Common myeloid progenitor, CD34-positive (primary cell): ENCODE measurements at regions of chr14 and their contacts with region 1.

Region 1: GRCh38 chr14:94056579-94057308 is 24.3 kb downstream of the DDX24 start:
- DNase-seq: no peak
- H3K4me3 ChIP-seq: no peak overlapping the region
- H3K27ac ChIP-seq: no peak overlapping the region
- H3K4me1 ChIP-seq: no peaks in the 10 kb centered on the region
- H3K27me3 ChIP-seq: no peaks in the 10 kb centered on the region

Region 2: DNA sequence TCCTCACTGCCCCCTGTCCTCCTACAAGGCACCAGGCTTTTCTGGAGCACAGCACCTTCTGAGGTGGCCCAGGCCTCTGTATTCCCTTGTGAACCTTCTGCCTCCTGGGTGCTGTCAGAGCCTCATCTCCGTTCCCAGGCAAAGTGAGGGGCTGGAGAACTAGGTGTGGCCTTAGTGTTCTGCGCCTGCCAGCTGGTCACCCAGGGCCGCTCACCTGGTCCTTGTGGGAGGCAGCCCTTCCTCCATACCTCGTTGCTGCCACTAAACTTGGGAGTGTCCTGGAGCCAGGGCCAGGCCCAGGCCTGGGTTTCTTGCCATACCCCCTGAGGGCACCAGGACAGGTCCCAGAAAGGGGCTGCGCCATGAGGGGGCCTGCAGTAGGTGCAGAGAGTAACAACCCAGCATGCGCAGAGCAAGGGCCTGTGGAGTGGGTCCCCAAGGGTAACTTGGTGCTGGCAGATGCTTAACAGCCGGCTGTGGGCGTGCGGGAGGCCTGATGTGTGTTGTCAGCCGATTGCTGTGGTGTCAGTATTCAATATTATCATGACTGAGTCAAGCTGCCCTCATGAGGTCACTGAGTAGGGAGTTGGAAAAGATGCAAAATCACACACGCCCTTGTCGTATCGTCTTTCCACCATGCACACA is 13.5 kb before region 1 on chr14:
- CTCF ChIA-PET with region 1: interaction called, 14 read pairs
- POLR2A ChIA-PET with region 1: no interaction called
- DNase-seq: no peak
- H3K4me3 ChIP-seq: no peak overlapping the region
- H3K27ac ChIP-seq: no peak overlapping the region
- H3K4me1 ChIP-seq: no peaks in the 10 kb centered on the region
- H3K27me3 ChIP-seq: no peaks in the 10 kb centered on the region

Region 3: GRCh38 chr14:94124582-94125377 is 68.0 kb after region 1 on chr14:
- CTCF ChIA-PET with region 1: no interaction called
- POLR2A ChIA-PET with region 1: no interaction called
- DNase-seq: no peak
- H3K4me3 ChIP-seq: no peak overlapping the region
- H3K27ac ChIP-seq: no peak overlapping the region
- H3K4me1 ChIP-seq: peaks cover 0 to 9% (median 9%) of the 10 kb centered on the region in 4 experiments
- H3K27me3 ChIP-seq: peaks cover 0 to 5% (median 0%) of the 10 kb centered on the region in 5 experiments